ENCODE measurements at regions of chr2 and their contacts with region 1.

Region 1: DNA sequence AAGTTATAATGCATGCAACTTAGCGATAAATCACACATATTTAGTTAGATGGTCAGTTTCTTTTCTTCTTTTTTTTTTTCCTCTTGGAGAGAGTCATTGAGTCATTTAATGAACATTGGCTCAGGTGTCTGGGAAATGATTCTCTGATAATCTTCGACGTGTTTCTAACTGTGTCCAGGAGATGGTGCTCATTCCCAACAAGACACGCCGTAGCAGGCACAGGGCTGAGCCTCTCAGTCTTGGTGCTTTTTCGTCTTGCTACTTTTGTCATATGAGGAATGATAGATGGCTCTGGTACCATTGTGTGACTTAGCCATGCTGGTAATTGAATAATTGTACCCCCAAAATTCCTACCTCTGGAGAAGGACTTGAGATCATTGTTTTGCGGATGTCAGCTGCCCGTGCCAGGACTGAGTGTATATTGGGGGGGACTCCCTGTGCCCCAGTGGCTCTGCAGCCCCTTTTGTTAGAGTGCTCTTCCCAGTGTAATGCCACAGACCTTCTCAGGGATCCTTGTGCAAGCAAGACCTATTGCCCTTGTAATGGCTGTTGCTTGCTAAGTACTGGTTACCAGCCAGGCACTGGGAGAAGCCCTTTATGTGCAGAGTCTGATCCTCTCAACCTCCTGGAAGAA is 107.6 kb upstream of the CYRIA start:
- DNase-seq: no peak
- ATAC-seq: peak; percentile 66

Region 2: DNA sequence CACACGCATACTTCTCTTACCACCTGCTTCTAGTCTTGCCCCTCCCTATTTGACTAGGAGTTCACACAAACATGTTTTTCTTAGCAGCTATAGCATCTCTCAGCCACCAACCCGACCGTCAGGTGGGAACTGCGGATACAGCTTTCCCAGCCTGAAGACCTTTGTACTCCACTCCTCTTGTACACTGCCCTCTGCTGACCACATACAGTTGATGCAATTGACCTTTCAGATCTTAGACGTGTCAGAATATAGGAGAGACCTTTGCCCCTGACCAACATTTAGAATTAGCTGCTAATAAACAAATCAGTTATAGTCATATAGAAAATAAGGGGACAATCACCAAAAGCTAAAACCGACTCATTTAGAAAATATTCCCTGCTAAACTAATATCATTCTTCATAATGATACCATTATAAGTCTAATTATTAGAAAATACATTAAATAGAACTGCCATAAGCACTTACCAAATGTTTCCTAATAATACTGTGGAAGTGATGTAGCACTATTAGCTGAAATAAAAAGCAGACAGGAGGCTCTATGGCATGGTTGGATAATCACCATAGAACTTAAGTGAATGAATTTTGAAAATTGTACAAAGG is 536.6 kb after region 1 on chr2:
- intact Hi-C with region 1: loop called (anchors 10 kb)
- DNase-seq: no peak
- ATAC-seq: peak; percentile 49

Region 3: DNA sequence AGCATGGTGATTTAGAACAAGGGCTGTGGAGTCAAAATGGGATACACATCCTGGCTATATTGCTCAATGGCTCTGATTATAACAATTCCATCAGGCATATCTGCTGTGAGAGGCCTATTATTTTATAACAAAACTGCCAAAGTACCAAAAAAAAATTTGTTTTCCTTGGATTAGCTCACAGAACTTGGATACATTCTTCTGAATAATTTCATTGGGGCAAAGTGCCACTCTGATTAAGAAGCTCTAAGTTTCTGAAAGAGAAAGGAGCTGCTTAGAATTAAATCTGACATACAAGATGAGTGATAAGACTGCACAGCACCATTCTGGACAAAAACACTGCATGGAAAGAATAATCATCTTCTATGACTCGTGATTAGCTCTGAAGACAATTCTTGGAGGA is 894.7 kb after region 1 on chr2:
- intact Hi-C with region 1: loop called (anchors 10 kb)
- DNase-seq: no peak
- ATAC-seq: no peak

Measured in left ventricle myocardium superior (tissue), 1 donor.